CD4-positive, alpha-beta T cell (primary cell): ENCODE measurements at regions of chr18 and their contacts with region 1.

Region 1: DNA sequence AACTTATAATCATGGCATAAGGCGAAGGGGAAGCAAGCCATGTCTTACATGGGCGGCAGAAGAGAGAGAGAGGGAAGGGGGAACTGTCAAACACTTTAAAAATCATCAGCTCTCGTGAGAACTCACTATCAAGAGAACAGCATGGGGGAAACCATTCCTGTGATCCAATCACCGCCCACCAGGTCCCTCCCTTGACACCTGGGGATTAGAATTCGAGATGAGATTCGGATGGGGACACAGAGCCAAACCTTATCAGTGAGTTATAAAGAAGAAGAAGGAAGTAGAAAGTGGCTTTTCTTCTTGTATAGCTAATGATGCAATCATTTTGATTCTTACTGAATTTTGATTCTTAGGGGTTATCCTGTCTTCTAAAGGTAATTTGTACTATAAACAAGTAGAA is 51.4 kb downstream of the SMCHD1 start:
- DNase-seq: no peak
- ATAC-seq: no peak
- H3K4me3 ChIP-seq: no peak overlapping the region
- H3K4me3 Mint-ChIP-seq: no peak overlapping the region
- H3K27ac ChIP-seq: no peak overlapping the region
- H3K27ac Mint-ChIP-seq: peak overlapping the region; percentile 27
- H3K4me1 ChIP-seq: no peaks in the 10 kb centered on the region
- H3K4me1 Mint-ChIP-seq: peaks cover 66% of the 10 kb centered on the region
- H3K27me3 ChIP-seq: no peaks in the 10 kb centered on the region
- H3K27me3 Mint-ChIP-seq: no peaks in the 10 kb centered on the region
- CTCF ChIP-seq: no peak

Region 2: GRCh38 chr18:2536493-2536892 is 170.4 kb before region 1 on chr18:
- CTCF ChIA-PET with region 1: no interaction called
- POLR2A ChIA-PET with region 1: no interaction called
- intact Hi-C with region 1: no loop called
- DNase-seq: no peak
- ATAC-seq: no peak
- H3K4me3 ChIP-seq: no peak overlapping the region
- H3K4me3 Mint-ChIP-seq: no peak overlapping the region
- H3K27ac ChIP-seq: no peak overlapping the region
- H3K27ac Mint-ChIP-seq: no peak overlapping the region
- H3K4me1 ChIP-seq: no peaks in the 10 kb centered on the region
- H3K4me1 Mint-ChIP-seq: no peaks in the 10 kb centered on the region
- H3K27me3 ChIP-seq: no peaks in the 10 kb centered on the region
- H3K27me3 Mint-ChIP-seq: no peaks in the 10 kb centered on the region
- CTCF ChIP-seq: no peak

Region 3: DNA sequence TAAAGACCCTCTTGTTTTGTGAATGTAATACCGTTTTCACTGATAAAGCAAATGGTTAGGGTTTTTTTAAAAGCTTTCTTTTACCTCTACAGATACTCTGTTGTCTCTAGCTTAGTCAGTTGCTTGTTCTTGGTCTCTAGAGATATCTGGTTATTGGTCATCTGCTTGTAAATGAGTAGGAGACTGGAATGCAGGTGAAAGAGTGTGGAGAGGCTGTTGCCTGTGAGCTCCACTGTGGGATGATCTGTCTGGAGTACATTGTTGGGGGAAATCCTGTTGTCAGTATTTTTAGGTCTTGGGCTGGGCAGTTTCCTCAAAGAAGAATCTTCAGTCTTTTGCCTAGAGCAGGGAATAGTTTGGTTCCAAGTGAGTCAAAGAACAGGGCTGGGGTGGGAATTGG is 16.3 kb after region 1 on chr18:
- CTCF ChIA-PET with region 1: no interaction called
- POLR2A ChIA-PET with region 1: no interaction called
- intact Hi-C with region 1: loop called in 1 of 2 experiments (anchors 2 kb)
- DNase-seq: no peak
- ATAC-seq: no peak
- H3K4me3 ChIP-seq: no peak overlapping the region
- H3K4me3 Mint-ChIP-seq: peak overlapping the region; percentile 32
- H3K27ac ChIP-seq: no peak overlapping the region
- H3K27ac Mint-ChIP-seq: peak overlapping the region; percentile 13
- H3K4me1 ChIP-seq: no peaks in the 10 kb centered on the region
- H3K4me1 Mint-ChIP-seq: peaks cover 57% of the 10 kb centered on the region
- H3K27me3 ChIP-seq: no peaks in the 10 kb centered on the region
- H3K27me3 Mint-ChIP-seq: no peaks in the 10 kb centered on the region
- CTCF ChIP-seq: no peak

Region 4: GRCh38 chr18:2736823-2737222 is 29.9 kb after region 1 on chr18:
- CTCF ChIA-PET with region 1: interaction called, 3 read pairs
- POLR2A ChIA-PET with region 1: no interaction called
- intact Hi-C with region 1: loop called in 1 of 2 experiments (anchors 5 kb)
- DNase-seq: no peak
- ATAC-seq: no peak
- H3K4me3 ChIP-seq: no peak overlapping the region
- H3K4me3 Mint-ChIP-seq: no peak overlapping the region
- H3K27ac ChIP-seq: no peak overlapping the region
- H3K27ac Mint-ChIP-seq: no peak overlapping the region
- H3K4me1 ChIP-seq: no peaks in the 10 kb centered on the region
- H3K4me1 Mint-ChIP-seq: peaks cover 24% of the 10 kb centered on the region
- H3K27me3 ChIP-seq: no peaks in the 10 kb centered on the region
- H3K27me3 Mint-ChIP-seq: no peaks in the 10 kb centered on the region
- CTCF ChIP-seq: no peak

Region 5: DNA sequence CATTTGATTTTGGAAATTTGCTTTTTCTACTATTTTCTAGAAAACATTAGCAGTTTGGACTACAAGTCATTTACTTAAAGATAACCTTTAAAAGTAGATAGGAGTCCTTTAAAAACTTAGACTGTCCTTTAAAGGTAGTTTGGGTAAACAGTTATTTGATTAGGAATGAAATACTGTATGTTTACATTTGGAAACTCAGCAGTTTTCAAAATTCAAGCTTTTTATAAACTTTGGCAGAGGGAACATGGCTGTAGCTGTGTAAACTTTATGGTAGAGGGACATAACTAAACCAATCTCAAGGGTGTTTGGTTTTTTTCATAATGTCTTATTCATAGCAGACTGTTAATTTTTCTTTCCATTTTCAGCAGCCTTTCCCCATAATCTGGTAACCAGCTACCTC is 39.4 kb after region 1 on chr18:
- CTCF ChIA-PET with region 1: no interaction called
- POLR2A ChIA-PET with region 1: interaction called, 3 read pairs
- intact Hi-C with region 1: loop called (anchors 5 kb)
- DNase-seq: no peak
- ATAC-seq: no peak
- H3K4me3 ChIP-seq: no peak overlapping the region
- H3K4me3 Mint-ChIP-seq: no peak overlapping the region
- H3K27ac ChIP-seq: no peak overlapping the region
- H3K27ac Mint-ChIP-seq: peak overlapping the region; percentile 79
- H3K4me1 ChIP-seq: no peaks in the 10 kb centered on the region
- H3K4me1 Mint-ChIP-seq: peaks cover 45% of the 10 kb centered on the region
- H3K27me3 ChIP-seq: no peaks in the 10 kb centered on the region
- H3K27me3 Mint-ChIP-seq: no peaks in the 10 kb centered on the region
- CTCF ChIP-seq: no peak

Region 6: GRCh38 chr18:2961821-2962220 is 254.9 kb after region 1 on chr18:
- CTCF ChIA-PET with region 1: no interaction called
- POLR2A ChIA-PET with region 1: no interaction called
- intact Hi-C with region 1: no loop called
- DNase-seq: peak in 3 of 14 experiments; percentile 35 to 45 (median 41)
- ATAC-seq: no peak
- H3K4me3 ChIP-seq: no peak overlapping the region
- H3K4me3 Mint-ChIP-seq: peak overlapping the region; percentile 83
- H3K27ac ChIP-seq: peak overlapping the region; percentile 87 to 88
- H3K27ac Mint-ChIP-seq: peak overlapping the region; percentile 96
- H3K4me1 ChIP-seq: peaks cover 80% of the 10 kb centered on the region
- H3K4me1 Mint-ChIP-seq: peaks cover 87% of the 10 kb centered on the region
- H3K27me3 ChIP-seq: no peaks in the 10 kb centered on the region
- H3K27me3 Mint-ChIP-seq: no peaks in the 10 kb centered on the region
- CTCF ChIP-seq: no peak

Region 7: GRCh38 chr18:2994603-2995432 is 287.9 kb after region 1 on chr18:
- CTCF ChIA-PET with region 1: no interaction called
- POLR2A ChIA-PET with region 1: no interaction called
- intact Hi-C with region 1: no loop called
- DNase-seq: peak; percentile 54 to 87 (median 68)
- ATAC-seq: peak; percentile 82
- H3K4me3 ChIP-seq: peak overlapping the region; percentile 24
- H3K4me3 Mint-ChIP-seq: peak overlapping the region; percentile 52
- H3K27ac ChIP-seq: no peak overlapping the region
- H3K27ac Mint-ChIP-seq: peak overlapping the region; percentile 61
- H3K4me1 ChIP-seq: peaks cover 61% of the 10 kb centered on the region
- H3K4me1 Mint-ChIP-seq: peaks cover 82% of the 10 kb centered on the region
- H3K27me3 ChIP-seq: no peaks in the 10 kb centered on the region
- H3K27me3 Mint-ChIP-seq: no peaks in the 10 kb centered on the region
- CTCF ChIP-seq: peak; percentile 75